Mammary epithelial cell (primary cell): ENCODE measurements at regions of chr4 and their contacts with region 1.

Region 1: GRCh38 chr4:123350191-123350544 is 46.4 kb upstream of the SPRY1 start:
- DNase-seq: peak; percentile 75
- H3K4me3 ChIP-seq: no peak overlapping the region
- H3K27ac ChIP-seq: no peak overlapping the region
- H3K4me1 ChIP-seq: peaks cover 22% of the 10 kb centered on the region
- H3K27me3 ChIP-seq: no peaks in the 10 kb centered on the region
- CTCF ChIP-seq: peak in 1 of 2 donors; percentile 42

Region 2: GRCh38 chr4:123133397-123134050 is 216.6 kb before region 1 on chr4:
- CTCF ChIA-PET with region 1: no interaction called
- dilution Hi-C with region 1: no loop called
- in situ Hi-C with region 1: no loop called
- intact Hi-C with region 1: no loop called
- DNase-seq: no peak
- H3K4me3 ChIP-seq: no peak overlapping the region
- H3K27ac ChIP-seq: no peak overlapping the region
- H3K4me1 ChIP-seq: no peaks in the 10 kb centered on the region
- H3K27me3 ChIP-seq: no peaks in the 10 kb centered on the region
- CTCF ChIP-seq: no peak

Region 3: DNA sequence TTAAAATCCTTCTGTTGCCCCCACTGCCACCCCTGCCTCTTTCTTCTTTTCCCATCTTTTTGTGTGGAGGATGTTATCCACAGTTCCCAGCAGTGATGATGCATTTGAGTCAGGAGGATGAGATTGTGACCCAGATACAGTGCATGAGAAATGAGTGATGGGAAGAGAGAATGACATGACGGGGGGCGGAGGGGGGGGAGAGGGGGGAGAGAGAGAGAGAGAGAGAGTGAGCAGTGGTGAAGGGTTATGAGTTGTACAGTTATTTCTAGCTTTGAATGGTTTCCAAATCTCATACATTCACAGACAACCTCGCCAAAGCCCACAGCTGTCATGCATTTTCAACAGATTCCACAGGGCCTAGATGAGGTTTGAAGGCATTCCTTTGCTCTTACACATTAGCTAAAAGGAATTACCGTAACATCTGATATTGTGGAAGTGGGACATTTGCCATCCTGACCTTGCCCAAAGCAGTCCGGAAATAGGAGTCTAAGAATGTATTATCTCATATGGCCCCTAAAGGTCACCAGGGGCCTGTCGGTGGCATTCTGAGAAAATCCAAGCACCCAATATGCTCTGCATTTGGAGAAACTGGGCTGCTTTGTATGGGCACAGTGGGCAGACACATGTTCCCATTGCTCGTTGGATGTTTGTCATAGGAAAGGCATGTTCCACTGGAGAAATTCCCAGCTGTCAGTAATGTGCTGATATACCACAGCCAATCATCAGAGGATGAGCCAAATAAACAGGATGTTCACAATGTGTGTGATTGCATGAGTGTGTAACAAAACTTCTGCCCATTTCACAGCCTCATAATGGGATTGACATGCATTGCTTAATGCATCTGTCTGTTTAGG is 482.2 kb after region 1 on chr4:
- CTCF ChIA-PET with region 1: no interaction called
- dilution Hi-C with region 1: no loop called
- in situ Hi-C with region 1: no loop called
- intact Hi-C with region 1: loop called (anchors 5 kb)
- DNase-seq: peak; percentile 94
- H3K4me3 ChIP-seq: peak overlapping the region in 1 of 3 experiments; percentile 4
- H3K27ac ChIP-seq: peak overlapping the region; percentile 79
- H3K4me1 ChIP-seq: peaks cover 33% of the 10 kb centered on the region
- H3K27me3 ChIP-seq: no peaks in the 10 kb centered on the region
- CTCF ChIP-seq: no peak